Endothelial cell of umbilical vein (primary cell): ENCODE measurements at regions of chr20 and their contacts with region 1.

Region 1: GRCh38 chr20:44532259-44532980 is 10.6 kb upstream of the SERINC3 start:
- DNase-seq: peak; percentile 52
- H3K4me3 ChIP-seq: peak overlapping the region; percentile 80 to 92 (median 85)
- H3K27ac ChIP-seq: peak overlapping the region; percentile 78
- H3K4me1 ChIP-seq: peaks cover 20% of the 10 kb centered on the region
- H3K27me3 ChIP-seq: no peaks in the 10 kb centered on the region
- CTCF ChIP-seq: no peak
- POLR2A ChIP-seq: peak; percentile 20

Region 2: DNA sequence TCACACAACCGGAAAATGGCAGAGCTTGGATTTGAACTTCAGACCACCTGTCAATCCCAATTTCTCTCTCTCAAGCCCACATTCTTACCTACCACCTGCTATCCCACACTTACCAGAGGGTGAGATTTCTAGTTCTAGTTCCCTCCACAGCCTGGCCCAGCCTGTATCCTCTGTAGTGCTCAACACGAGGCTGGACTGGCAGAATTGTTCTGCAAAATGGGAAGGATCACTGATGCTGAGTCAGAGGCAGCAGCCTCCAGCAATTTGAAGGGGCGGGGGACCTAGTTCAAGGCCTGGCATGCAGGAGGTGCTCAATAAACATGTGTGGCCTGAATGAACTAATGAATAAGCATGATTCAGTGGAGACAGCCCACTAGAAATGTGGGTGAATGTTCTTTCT is 110.3 kb before region 1 on chr20:
- CTCF ChIA-PET with region 1: no interaction called
- POLR2A ChIA-PET with region 1: no interaction called
- dilution Hi-C with region 1: no loop called
- intact Hi-C with region 1: no loop called
- DNase-seq: no peak
- H3K4me3 ChIP-seq: no peak overlapping the region
- H3K27ac ChIP-seq: no peak overlapping the region
- H3K4me1 ChIP-seq: no peaks in the 10 kb centered on the region
- H3K27me3 ChIP-seq: peaks cover 0 to 2% of the 10 kb centered on the region in 2 experiments
- CTCF ChIP-seq: no peak
- POLR2A ChIP-seq: no peak

Region 3: GRCh38 chr20:44460795-44461141 is 71.7 kb before region 1 on chr20:
- CTCF ChIA-PET with region 1: no interaction called
- POLR2A ChIA-PET with region 1: no interaction called
- dilution Hi-C with region 1: no loop called
- intact Hi-C with region 1: no loop called
- DNase-seq: peak; percentile 16
- H3K4me3 ChIP-seq: no peak overlapping the region
- H3K27ac ChIP-seq: no peak overlapping the region
- H3K4me1 ChIP-seq: no peaks in the 10 kb centered on the region
- H3K27me3 ChIP-seq: no peaks in the 10 kb centered on the region
- CTCF ChIP-seq: peak; percentile 5 to 19
- POLR2A ChIP-seq: no peak

Region 4: GRCh38 chr20:44521484-44522481 is 10.6 kb before region 1 on chr20 and contains the start of gene SERINC3:
- CTCF ChIA-PET with region 1: interaction called, 4 read pairs
- POLR2A ChIA-PET with region 1: no interaction called
- dilution Hi-C with region 1: no loop called
- intact Hi-C with region 1: loop called (anchors 1 kb)
- DNase-seq: peak; percentile 96
- H3K4me3 ChIP-seq: peak within 1 kb of the TSS; percentile 25 to 86 (median 78)
- H3K27ac ChIP-seq: peak within 1 kb of the TSS; percentile 90
- H3K4me1 ChIP-seq: peaks cover 33% of the 10 kb centered on the region
- H3K27me3 ChIP-seq: no peaks in the 10 kb centered on the region
- CTCF ChIP-seq: peak in 1 of 2 donors; percentile 0
- POLR2A ChIP-seq: peak; percentile 82
- total RNA-seq, gene SERINC3: 83.7 TPM in 2 replicates

Region 5: GRCh38 chr20:44552950-44553908 is 20.8 kb after region 1 on chr20:
- CTCF ChIA-PET with region 1: interaction called, 6 read pairs
- POLR2A ChIA-PET with region 1: no interaction called
- dilution Hi-C with region 1: no loop called
- intact Hi-C with region 1: loop called (anchors 2 kb)
- DNase-seq: peak; percentile 92
- H3K4me3 ChIP-seq: no peak overlapping the region
- H3K27ac ChIP-seq: peak overlapping the region; percentile 85
- H3K4me1 ChIP-seq: peaks cover 37% of the 10 kb centered on the region
- H3K27me3 ChIP-seq: no peaks in the 10 kb centered on the region
- CTCF ChIP-seq: no peak
- POLR2A ChIP-seq: no peak

Region 6: DNA sequence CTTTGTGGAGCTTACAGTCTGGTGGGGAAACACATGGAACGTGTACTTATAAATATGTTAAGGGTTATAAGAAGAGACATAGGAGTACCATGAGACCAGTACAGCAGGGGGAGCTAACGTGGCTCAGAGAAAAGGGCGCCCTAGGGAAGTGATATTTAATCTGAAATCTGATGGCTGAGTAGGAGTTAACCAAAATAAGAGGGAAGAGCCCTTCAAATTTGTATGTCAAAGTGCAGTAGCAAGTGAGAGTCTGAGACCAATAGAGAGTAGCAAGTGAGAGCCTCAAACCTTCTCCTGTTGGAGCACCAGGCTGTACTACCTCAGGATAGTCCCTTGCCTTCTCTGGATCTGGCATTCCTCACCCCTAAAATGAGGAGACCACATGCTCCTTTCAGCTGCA is 43.9 kb after region 1 on chr20:
- CTCF ChIA-PET with region 1: interaction called, 4 read pairs
- POLR2A ChIA-PET with region 1: no interaction called
- dilution Hi-C with region 1: no loop called
- intact Hi-C with region 1: loop called (anchors 2 kb)
- DNase-seq: peak; percentile 76
- H3K4me3 ChIP-seq: no peak overlapping the region
- H3K27ac ChIP-seq: peak overlapping the region; percentile 61
- H3K4me1 ChIP-seq: peaks cover 53% of the 10 kb centered on the region
- H3K27me3 ChIP-seq: no peaks in the 10 kb centered on the region
- CTCF ChIP-seq: peak; percentile 35 to 51
- POLR2A ChIP-seq: no peak

Region 7: GRCh38 chr20:44598423-44599305 is 66.2 kb after region 1 on chr20:
- CTCF ChIA-PET with region 1: interaction called, 6 read pairs
- POLR2A ChIA-PET with region 1: no interaction called
- dilution Hi-C with region 1: no loop called
- intact Hi-C with region 1: loop called (anchors 2 kb)
- DNase-seq: peak; percentile 71
- H3K4me3 ChIP-seq: no peak overlapping the region
- H3K27ac ChIP-seq: peak overlapping the region; percentile 81
- H3K4me1 ChIP-seq: peaks cover 79% of the 10 kb centered on the region
- H3K27me3 ChIP-seq: no peaks in the 10 kb centered on the region
- CTCF ChIP-seq: peak; percentile 13 to 24
- POLR2A ChIP-seq: no peak

Region 8: GRCh38 chr20:44642203-44643153 is 110.1 kb after region 1 on chr20:
- CTCF ChIA-PET with region 1: no interaction called
- POLR2A ChIA-PET with region 1: no interaction called
- dilution Hi-C with region 1: no loop called
- intact Hi-C with region 1: no loop called
- DNase-seq: peak; percentile 89
- H3K4me3 ChIP-seq: no peak overlapping the region
- H3K27ac ChIP-seq: peak overlapping the region; percentile 98
- H3K4me1 ChIP-seq: peaks cover 48% of the 10 kb centered on the region
- H3K27me3 ChIP-seq: no peaks in the 10 kb centered on the region
- CTCF ChIP-seq: no peak
- POLR2A ChIP-seq: peak; percentile 21